ENCODE measurements at regions of chr14 and their contacts with region 1.

Region 1: DNA sequence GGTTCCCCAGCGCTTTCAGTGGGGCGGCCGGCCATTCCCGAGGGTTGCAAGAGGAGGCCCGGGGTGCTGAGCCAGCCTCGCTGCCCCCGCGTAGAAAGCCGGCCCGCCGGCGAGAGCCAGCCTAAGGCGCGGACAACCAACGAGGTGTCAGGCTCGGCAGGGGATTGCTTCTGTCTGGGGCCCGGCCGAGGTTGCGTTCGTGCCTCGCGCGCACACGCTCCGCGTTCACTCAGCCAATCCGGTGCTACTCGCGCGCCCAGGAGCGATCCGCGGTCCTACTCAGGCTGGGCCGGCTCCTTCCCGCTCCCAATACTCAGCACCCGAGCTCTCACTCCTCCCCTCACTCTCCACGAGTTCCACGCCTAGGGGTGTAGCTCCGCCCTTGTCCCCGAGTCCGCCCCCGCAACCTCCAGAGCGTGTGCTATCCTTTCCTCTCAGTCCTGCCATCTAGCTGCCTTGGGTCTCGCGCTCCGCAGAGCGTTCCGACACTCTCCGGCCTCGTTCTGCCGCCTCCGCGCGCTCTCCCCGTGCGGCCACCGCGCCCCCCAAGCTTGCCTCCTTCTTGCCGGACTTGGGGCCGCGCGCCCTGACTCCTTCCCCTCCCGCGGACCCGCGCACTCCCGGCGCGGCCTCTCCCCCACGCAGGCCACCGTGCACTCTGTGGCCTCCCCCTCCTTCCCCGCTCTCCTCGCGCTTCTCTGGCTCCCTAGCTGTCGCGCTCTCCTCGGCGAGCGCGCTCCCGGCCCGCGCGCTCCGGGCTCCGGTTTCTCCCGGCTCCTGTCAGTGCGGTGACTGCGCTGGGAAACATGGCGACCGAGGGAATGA is at the start of gene GPHN:
- DNase-seq: peak; percentile 95 to 97
- ATAC-seq: peak; percentile 97 to 99 (median 98)
- H3K4me3 ChIP-seq: peak within 1 kb of the TSS; percentile 63 to 95 (median 88)
- H3K27ac ChIP-seq: peak within 1 kb of the TSS; percentile 80 to 96 (median 94)
- H3K4me1 ChIP-seq: peaks cover 0 to 53% (median 40%) of the 10 kb centered on the region in 9 donors
- H3K27me3 ChIP-seq: peaks cover 0 to 6% (median 0%) of the 10 kb centered on the region in 7 donors
- CTCF ChIP-seq: peak in 8 of 9 donors; percentile 20 to 77 (median 43)
- total RNA-seq, gene GPHN: 24.2 to 45.7 (median 32.2) TPM

Region 2: GRCh38 chr14:66351310-66351709 is 156.6 kb before region 1 on chr14:
- intact Hi-C with region 1: no loop called
- DNase-seq: no peak
- ATAC-seq: no peak
- H3K4me3 ChIP-seq: no peak overlapping the region
- H3K27ac ChIP-seq: no peak overlapping the region
- H3K4me1 ChIP-seq: no peaks in the 10 kb centered on the region
- H3K27me3 ChIP-seq: no peaks in the 10 kb centered on the region
- CTCF ChIP-seq: no peak

Region 3: GRCh38 chr14:66539034-66539433 is 31.1 kb after region 1 on chr14:
- intact Hi-C with region 1: loop called in 1 of 10 experiments (anchors 5 kb)
- DNase-seq: no peak
- ATAC-seq: no peak
- H3K4me3 ChIP-seq: no peak overlapping the region
- H3K27ac ChIP-seq: no peak overlapping the region
- H3K4me1 ChIP-seq: peaks cover 0 to 32% (median 7%) of the 10 kb centered on the region in 9 donors
- H3K27me3 ChIP-seq: no peaks in the 10 kb centered on the region
- CTCF ChIP-seq: no peak

Region 4: DNA sequence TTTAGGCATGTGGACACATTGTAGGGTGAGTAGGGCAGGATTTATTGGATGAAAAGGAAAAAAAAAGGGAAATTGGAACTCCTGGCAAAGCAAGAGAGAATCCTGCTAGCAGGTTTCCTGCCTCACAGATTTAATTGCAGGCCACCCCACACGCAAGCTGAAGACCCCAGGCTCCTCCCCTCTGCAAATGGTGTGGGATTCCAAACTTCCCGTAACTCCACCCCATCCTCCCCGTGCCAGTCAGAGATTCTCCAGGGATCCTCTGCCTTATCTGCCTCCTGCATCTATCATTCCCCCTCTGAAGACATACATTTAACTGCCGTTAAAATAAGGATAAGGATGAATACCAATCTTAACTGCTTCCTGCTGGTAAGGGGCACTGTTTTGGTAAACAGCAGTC is 431.5 kb after region 1 on chr14:
- intact Hi-C with region 1: no loop called
- DNase-seq: no peak
- ATAC-seq: no peak
- H3K4me3 ChIP-seq: no peak overlapping the region
- H3K27ac ChIP-seq: no peak overlapping the region
- H3K4me1 ChIP-seq: no peaks in the 10 kb centered on the region
- H3K27me3 ChIP-seq: no peaks in the 10 kb centered on the region
- CTCF ChIP-seq: no peak